ENCODE measurements at regions of chr12 and their contacts with region 1.

Region 1: DNA sequence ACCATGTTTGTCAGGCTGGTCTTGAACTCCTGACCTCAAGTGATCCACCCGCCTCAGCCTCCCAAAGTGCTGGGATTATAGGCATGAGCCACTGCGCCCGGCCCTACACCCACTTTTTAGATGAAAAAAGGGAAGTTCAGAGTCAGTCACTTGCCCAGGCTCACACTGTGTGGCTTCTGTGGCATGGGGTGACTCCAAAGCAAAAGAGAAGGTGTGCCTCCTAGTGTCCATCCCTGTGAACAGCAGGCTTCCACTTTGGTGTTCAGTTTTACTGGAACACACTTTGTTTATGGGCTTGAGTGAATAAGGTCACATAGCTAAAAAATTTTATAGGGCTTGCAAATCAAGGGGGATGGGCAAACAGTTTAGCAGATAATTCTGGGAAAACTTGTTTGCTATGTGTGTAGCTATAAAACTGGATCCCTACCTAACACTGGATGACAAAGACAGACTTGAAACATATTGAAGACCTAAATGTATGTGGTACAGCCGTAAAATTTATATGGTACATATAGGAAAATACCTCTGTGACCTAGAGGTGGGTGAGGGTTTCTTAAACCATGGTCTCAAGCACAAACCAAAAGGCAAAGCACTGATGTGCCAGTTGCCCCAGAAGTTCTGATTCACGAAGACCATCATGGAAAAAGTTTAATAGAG is 54.9 kb downstream of the EID3 start:
- DNase-seq: peak; percentile 84
- ATAC-seq: peak; percentile 88
- H3K4me3 Mint-ChIP-seq: no peak overlapping the region
- H3K27ac Mint-ChIP-seq: no peak overlapping the region
- H3K4me1 Mint-ChIP-seq: peaks cover 9% of the 10 kb centered on the region
- H3K27me3 Mint-ChIP-seq: no peaks in the 10 kb centered on the region

Region 2: DNA sequence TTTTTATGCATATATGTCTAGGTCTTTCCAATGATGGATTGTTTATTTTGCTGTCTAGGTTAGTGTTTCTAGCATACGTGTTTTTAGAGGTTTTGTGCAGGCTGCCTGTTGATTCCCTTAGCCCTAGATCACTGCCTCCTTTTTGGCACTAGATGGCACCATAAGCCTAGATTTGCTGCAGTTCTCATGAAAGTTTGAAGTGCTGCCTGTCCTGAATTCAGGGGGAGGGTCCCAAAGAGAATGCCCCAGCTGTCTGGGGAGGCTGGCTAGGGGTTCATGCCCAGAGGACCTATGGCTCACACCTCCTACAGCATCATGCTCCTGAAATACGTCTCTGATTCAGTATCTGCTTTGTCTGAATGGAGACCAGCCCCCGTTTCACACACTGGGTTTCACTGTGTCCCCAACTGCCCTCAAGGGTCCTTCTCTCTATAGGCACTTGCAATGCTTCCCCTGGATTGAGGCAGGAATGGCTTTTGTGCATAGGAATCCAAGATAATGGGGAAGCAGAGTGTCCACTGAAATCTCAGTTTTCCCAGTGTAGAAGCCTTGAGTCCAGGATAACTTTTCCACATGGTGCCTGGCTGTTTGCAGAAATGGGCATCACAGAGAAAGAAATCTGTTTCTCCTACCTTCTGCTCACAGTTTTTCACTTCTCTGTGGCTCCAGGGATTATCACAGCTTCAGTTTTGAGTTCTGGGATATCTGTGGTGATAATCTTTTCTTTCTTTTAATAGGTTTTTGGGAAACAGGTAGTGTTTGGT is 157.1 kb before region 1 on chr12:
- CTCF ChIA-PET with region 1: interaction called, 11 read pairs
- DNase-seq: peak; percentile 62
- ATAC-seq: peak; percentile 78
- H3K4me3 Mint-ChIP-seq: no peak overlapping the region
- H3K27ac Mint-ChIP-seq: no peak overlapping the region
- H3K4me1 Mint-ChIP-seq: peaks cover 6% of the 10 kb centered on the region
- H3K27me3 Mint-ChIP-seq: peaks cover 12% of the 10 kb centered on the region

Region 3: DNA sequence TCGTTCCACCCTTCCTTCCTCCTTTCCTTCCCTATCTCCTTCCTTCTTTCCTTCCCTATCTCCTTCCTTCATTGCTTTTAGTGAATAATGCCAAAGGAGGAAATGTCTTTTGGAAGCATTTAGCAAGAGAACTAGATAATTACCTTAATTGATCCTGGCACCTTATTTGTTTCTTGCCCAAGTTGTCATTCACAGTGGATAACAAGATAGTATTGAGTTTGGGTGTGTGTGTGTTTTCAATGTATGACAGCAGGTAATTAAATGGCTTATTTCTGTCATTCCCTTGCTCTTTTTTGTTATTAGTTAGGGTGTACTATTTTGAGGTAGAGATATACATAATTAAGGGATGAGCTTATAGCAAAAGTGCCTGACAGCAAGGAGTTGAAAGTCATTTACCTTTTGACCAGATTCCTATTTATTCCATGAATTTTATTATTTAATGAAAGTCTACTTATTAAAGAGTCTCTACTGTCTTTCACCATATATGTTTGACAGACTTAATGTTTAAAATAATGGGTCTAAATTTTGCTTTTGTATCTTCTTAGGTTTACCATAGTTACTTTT is 24.7 kb before region 1 on chr12:
- CTCF ChIA-PET with region 1: no interaction called
- DNase-seq: no peak
- ATAC-seq: no peak
- H3K4me3 Mint-ChIP-seq: no peak overlapping the region
- H3K27ac Mint-ChIP-seq: no peak overlapping the region
- H3K4me1 Mint-ChIP-seq: no peaks in the 10 kb centered on the region
- H3K27me3 Mint-ChIP-seq: no peaks in the 10 kb centered on the region

Region 4: DNA sequence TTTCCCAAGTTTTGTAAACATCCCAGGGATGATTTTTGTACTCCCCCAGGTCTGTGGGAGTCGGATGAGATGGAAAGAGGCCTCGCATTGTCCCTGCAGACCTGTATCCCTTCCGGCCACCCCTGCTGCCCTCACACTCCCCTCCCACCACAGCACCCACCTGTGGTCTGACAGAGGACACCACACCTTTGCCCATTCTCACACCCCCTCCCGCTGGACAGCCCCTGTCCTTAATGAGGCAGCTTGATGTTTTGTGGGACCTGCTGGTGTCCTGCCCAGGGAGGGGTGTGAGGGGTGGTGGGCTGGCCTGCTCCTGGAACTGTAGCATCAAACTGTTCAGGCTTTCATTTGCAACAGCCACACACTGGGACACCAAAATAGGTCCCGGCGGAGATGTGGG is 16.3 kb after region 1 on chr12:
- CTCF ChIA-PET with region 1: no interaction called
- DNase-seq: peak; percentile 30
- ATAC-seq: no peak
- H3K4me3 Mint-ChIP-seq: no peak overlapping the region
- H3K27ac Mint-ChIP-seq: no peak overlapping the region
- H3K4me1 Mint-ChIP-seq: peaks cover 18% of the 10 kb centered on the region
- H3K27me3 Mint-ChIP-seq: peaks cover 4% of the 10 kb centered on the region